Endothelial cell of umbilical vein (primary cell): ENCODE measurements at regions of chr19 and their contacts with region 1.

Region 1: DNA sequence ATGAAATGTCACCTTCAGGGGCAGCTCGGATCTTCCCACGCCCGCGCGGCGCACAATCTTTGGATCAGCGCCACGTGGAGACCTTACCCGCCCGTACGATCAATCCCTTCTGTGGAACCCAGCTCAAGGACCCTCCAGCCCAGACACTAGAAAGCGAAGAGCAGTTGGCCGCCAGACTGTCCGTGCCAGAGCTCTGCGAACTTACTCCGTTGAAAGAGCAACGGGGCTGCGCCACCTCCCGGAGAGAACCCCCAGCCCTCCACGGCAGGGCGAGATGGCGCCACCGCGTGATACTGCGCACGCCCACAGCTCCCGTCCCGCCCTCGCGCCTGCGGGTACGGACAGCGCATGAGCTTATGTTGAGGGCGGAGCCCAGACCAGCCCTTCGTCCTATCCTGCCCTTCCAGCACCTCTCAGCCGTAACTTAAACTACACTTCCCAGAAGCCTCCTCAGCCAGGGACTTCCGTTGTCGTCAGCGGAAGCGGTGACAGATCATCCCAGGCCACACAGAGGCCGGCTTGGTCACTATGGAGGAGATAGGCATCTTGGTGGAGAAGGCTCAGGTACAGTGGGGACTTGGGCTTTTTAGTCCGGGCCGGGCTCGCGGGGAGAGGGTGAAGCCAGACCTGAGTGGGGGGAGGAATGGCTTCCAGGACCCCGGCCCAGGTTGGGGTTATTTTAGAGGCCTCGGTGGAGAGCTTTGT is at the start of gene PSMC4:
- DNase-seq: peak; percentile 100
- H3K4me3 ChIP-seq: peak within 1 kb of the TSS; percentile 70 to 83 (median 79)
- H3K27ac ChIP-seq: peak within 1 kb of the TSS; percentile 82
- H3K4me1 ChIP-seq: peaks cover 13% of the 10 kb centered on the region
- H3K27me3 ChIP-seq: no peaks in the 10 kb centered on the region
- CTCF ChIP-seq: peak; percentile 86 to 89
- POLR2A ChIP-seq: peak; percentile 86
- total RNA-seq, gene PSMC4: 110 and 114 TPM in 2 replicates

Region 2: GRCh38 chr19:39792999-39793546 is 177.8 kb before region 1 on chr19:
- CTCF ChIA-PET with region 1: interaction called, 43 read pairs
- POLR2A ChIA-PET with region 1: interaction called, 3 read pairs
- dilution Hi-C with region 1: no loop called
- intact Hi-C with region 1: loop called (anchors 1 kb)
- DNase-seq: peak; percentile 78
- H3K4me3 ChIP-seq: peak overlapping the region; percentile 21 to 51 (median 29)
- H3K27ac ChIP-seq: no peak overlapping the region
- H3K4me1 ChIP-seq: no peaks in the 10 kb centered on the region
- H3K27me3 ChIP-seq: peaks cover 1 to 11% of the 10 kb centered on the region in 2 experiments
- CTCF ChIP-seq: peak; percentile 84 to 96
- POLR2A ChIP-seq: no peak

Region 3: DNA sequence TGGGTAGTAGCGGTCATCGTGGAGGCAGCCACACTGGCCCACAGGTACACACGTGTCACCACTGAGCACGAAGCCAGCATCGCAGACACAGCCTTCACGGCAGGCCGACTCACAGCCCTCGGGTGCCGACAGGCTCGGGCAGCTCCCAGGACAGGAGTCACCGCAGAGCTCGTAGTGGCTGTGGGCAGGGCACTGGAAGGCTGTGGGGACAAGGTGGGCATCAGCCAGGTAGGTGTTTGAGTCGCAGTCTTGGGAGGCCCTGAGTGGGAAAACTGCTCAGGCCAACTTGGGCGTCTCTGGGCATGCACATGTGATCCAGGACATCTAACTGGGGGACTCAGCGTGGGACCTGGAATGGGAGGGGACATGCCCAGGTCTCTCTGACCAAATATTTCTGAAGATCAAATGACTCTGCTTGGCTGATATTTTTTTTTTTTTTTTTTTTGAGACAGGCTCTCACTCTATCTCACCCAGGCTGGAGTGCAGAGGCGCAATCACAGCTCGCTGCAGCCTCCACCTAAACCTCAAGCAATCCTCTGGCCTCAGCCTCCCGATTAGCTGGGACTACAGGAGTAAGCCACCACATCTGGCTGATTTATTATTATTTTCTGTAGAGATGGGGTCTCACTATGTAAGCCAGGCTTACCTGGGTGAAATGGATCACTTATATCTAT is 80.8 kb before region 1 on chr19:
- CTCF ChIA-PET with region 1: no interaction called
- POLR2A ChIA-PET with region 1: no interaction called
- dilution Hi-C with region 1: no loop called
- intact Hi-C with region 1: loop called (anchors 5 kb)
- DNase-seq: no peak
- H3K4me3 ChIP-seq: no peak overlapping the region
- H3K27ac ChIP-seq: no peak overlapping the region
- H3K4me1 ChIP-seq: no peaks in the 10 kb centered on the region
- H3K27me3 ChIP-seq: peaks cover 0 to 4% of the 10 kb centered on the region in 2 experiments
- CTCF ChIP-seq: no peak
- POLR2A ChIP-seq: no peak

Region 4: DNA sequence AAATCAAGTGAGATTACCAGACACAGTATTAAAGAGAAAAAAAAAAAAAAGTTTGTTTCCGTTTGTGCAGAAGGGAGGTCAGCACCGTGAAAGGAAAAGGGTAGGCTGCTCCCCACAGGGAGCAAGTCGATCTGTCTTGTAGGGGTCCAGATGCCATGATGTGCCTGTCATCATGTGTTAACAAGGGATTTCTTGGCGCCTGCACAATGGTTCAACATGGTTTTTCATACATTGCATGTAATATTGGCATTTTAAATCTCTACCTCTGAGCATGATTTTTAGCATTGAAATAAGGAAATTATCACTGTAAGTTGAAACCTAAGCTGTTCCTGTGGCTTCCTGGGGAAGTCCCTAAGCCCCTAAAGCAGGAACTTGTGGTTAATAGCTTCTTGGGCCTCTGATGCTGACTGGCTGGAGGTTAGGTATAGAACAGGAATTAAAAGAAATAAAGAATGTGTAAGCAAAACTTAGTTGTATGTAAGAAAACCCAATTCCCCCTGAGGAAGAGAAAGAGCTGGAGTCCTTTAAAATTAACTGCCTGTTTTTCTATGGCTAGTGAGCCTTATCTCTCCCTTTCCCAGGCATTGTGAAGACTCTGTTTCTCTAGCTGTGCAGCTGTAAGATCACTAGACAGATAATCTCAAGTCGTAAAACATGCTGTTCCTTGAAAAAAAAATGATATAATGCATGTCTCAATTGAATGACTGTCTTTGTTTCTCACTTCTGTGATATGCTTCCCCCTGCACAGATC is 29.0 kb before region 1 on chr19:
- CTCF ChIA-PET with region 1: interaction called, 15 read pairs
- POLR2A ChIA-PET with region 1: no interaction called
- dilution Hi-C with region 1: no loop called
- intact Hi-C with region 1: no loop called
- DNase-seq: peak; percentile 42
- H3K4me3 ChIP-seq: peak overlapping the region in 1 of 3 experiments; percentile 27
- H3K27ac ChIP-seq: no peak overlapping the region
- H3K4me1 ChIP-seq: peaks cover 12% of the 10 kb centered on the region
- H3K27me3 ChIP-seq: peaks cover 2 to 5% of the 10 kb centered on the region in 2 experiments
- CTCF ChIP-seq: no peak
- POLR2A ChIP-seq: no peak

Region 5: GRCh38 chr19:40190891-40191835 is 220.3 kb after region 1 on chr19 and contains the start of gene MAP3K10:
- CTCF ChIA-PET with region 1: interaction called, 3 read pairs
- POLR2A ChIA-PET with region 1: no interaction called
- dilution Hi-C with region 1: no loop called
- intact Hi-C with region 1: loop called (anchors 1 kb)
- DNase-seq: peak; percentile 61
- H3K4me3 ChIP-seq: peak within 1 kb of the TSS; percentile 68 to 86 (median 83)
- H3K27ac ChIP-seq: peak within 1 kb of the TSS; percentile 73
- H3K4me1 ChIP-seq: peaks cover 2% of the 10 kb centered on the region
- H3K27me3 ChIP-seq: no peaks in the 10 kb centered on the region
- CTCF ChIP-seq: no peak
- POLR2A ChIP-seq: peak; percentile 13
- total RNA-seq, gene MAP3K10: 16.5 and 19.4 TPM in 2 replicates